Panc1 (cell line): ENCODE measurements at regions of chr17 and their contacts with region 1.

Region 1: DNA sequence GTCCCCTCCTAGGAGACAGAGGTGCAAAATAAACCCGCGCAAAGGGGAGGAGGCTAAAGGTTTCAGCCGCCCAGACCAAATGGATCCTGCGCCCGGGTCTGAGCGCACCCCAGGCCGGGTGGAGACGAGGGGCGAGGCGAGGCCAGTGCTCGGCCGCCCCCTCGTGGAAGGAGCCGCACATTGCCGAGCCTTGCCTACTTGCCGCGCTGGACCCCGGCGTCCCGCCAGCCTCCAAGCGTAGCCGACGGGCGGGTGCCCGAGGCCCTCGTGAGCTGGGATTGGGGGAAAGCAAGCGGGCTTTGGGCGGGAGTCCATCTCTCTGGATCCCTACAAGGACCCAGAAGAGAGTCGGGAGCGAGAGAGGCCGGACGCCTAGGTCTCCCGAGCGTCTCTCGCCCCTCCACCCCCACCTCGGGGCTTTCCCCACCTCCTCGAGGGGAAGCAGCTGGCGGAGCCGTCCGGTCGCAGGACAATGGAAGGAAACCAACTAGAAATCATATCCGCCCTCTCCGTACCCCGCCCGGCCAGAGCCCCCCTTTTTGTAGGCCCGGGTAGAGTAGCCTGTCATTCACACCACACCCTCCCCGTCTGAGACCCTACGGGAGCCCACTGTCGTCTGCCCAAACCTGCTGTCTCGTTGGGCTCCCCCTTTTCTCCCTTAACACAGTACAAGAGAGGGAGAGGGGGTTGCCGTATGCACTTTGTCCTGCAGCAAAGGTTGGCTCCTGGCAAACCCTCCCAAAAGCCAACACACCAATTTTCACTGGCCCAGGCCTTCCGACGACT is 664 bp upstream of the BCL6B start:
- DNase-seq: no peak
- ATAC-seq: peak; percentile 83
- H3K4me3 ChIP-seq: peak overlapping the region; percentile 16 to 49
- H3K27ac ChIP-seq: peak overlapping the region; percentile 89
- H3K4me1 ChIP-seq: peaks cover 20% of the 10 kb centered on the region
- H3K27me3 ChIP-seq: no peaks in the 10 kb centered on the region
- CTCF ChIP-seq: peak; percentile 97

Region 2: GRCh38 chr17:6574687-6575595 is 447.2 kb before region 1 on chr17:
- CTCF ChIA-PET with region 1: no interaction called
- POLR2A ChIA-PET with region 1: no interaction called
- in situ Hi-C with region 1: no loop called
- intact Hi-C with region 1: no loop called
- DNase-seq: no peak
- ATAC-seq: no peak
- H3K4me3 ChIP-seq: no peak overlapping the region
- H3K27ac ChIP-seq: no peak overlapping the region
- H3K4me1 ChIP-seq: no peaks in the 10 kb centered on the region
- H3K27me3 ChIP-seq: no peaks in the 10 kb centered on the region
- CTCF ChIP-seq: no peak

Region 3: DNA sequence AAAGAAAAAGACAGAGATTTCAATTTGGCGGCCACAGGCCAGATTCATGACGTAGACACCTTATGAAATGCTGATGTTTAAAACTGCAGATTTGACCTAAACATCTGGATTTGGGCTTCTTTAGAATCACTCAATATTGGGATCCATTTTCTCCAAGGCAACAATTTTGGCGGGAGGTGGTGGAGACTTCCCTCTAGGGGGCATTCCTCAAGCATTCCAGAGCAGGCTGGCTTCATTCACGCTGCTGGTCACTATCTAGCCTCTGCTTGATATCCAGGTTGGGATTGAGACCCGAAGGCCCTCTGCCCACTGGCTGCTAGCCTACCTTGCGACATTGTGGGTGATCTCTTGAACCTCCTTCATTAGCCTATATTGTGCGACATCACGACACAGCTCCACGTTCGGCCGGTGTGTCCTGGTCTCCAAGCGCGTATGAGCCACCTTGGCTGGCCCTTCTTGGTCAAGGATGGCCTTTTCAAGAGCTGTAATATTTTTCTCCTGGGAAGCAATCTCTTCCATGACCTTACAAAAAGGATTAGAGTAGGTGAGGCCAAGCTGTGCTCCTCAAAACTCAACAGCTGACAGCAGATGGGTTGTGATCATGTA is 221.7 kb before region 1 on chr17:
- CTCF ChIA-PET with region 1: no interaction called
- POLR2A ChIA-PET with region 1: no interaction called
- in situ Hi-C with region 1: no loop called
- intact Hi-C with region 1: no loop called
- DNase-seq: no peak
- ATAC-seq: peak; percentile 77
- H3K4me3 ChIP-seq: no peak overlapping the region
- H3K27ac ChIP-seq: no peak overlapping the region
- H3K4me1 ChIP-seq: no peaks in the 10 kb centered on the region
- H3K27me3 ChIP-seq: no peaks in the 10 kb centered on the region
- CTCF ChIP-seq: peak; percentile 86

Region 4: GRCh38 chr17:6913608-6914443 is 108.4 kb before region 1 on chr17:
- CTCF ChIA-PET with region 1: interaction called, 8 read pairs
- POLR2A ChIA-PET with region 1: no interaction called
- in situ Hi-C with region 1: no loop called
- intact Hi-C with region 1: loop called (anchors 5 kb)
- DNase-seq: peak; percentile 35
- ATAC-seq: peak; percentile 88
- H3K4me3 ChIP-seq: peak overlapping the region in 1 of 2 experiments; percentile 9; a peak in 1 of 4 replicates
- H3K27ac ChIP-seq: no peak overlapping the region
- H3K4me1 ChIP-seq: no peaks in the 10 kb centered on the region
- H3K27me3 ChIP-seq: no peaks in the 10 kb centered on the region
- CTCF ChIP-seq: peak; percentile 90